ENCODE measurements at regions of chr4 and their contacts with region 1.

Region 1: DNA sequence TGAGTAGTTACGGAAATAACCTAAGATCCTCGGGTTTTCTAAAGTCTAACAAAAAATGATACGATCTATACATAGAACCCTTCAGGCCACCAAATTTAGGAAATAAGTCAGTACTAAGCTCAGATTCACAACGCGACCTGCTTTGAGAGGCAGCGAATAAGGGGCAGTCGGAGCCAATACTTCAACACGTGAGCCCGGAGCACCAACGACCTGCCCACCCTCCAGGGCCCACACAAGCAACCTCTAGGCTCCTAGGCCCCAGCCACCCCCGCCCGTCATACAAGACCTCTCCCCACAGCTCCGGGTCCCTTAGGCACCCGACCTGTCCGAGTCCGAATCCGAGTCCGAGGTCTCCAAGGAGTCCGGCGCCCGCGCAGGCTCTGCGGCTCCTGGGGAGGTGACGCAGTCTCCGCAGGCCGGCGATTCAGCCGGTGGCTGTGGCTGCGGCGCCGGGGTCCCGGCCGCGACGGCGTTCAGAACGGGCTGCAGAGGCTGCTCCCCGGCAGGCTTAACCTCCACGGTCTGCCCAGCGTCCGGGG is 580 bp downstream of the NAF1 start:
- H3K4me3 Mint-ChIP-seq: peak overlapping the region; percentile 90
- H3K27ac Mint-ChIP-seq: peak overlapping the region; percentile 91
- H3K4me1 Mint-ChIP-seq: peaks cover 29% of the 10 kb centered on the region
- H3K27me3 Mint-ChIP-seq: peaks cover 6% of the 10 kb centered on the region

Region 2: DNA sequence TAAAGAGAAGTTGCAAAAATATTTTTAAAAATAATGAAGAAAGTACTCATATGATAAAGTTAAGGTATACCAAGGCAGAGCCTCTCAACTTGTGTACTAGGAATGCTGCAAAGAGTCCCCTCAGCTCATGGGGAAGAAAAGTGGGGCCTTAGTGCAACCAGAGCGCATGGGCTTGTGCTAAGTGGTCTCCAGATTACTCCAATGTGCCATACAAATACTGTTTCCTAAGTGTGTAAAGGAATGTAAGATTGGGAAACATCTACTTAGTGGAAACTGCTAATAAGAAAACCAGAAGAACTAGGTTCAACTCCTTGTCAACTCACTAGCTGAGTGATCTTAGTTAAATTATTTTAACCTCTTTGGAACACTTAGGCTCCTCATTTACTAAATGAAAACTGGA is 38.5 kb before region 1 on chr4:
- intact Hi-C with region 1: no loop called
- H3K4me3 Mint-ChIP-seq: no peak overlapping the region
- H3K27ac Mint-ChIP-seq: no peak overlapping the region
- H3K4me1 Mint-ChIP-seq: no peaks in the 10 kb centered on the region
- H3K27me3 Mint-ChIP-seq: no peaks in the 10 kb centered on the region

Region 3: GRCh38 chr4:163494360-163495162 is 328.5 kb after region 1 on chr4 and contains the start of gene TMA16:
- intact Hi-C with region 1: loop called (anchors 2 kb)
- H3K4me3 Mint-ChIP-seq: peak within 1 kb of the TSS; percentile 95
- H3K27ac Mint-ChIP-seq: peak within 1 kb of the TSS; percentile 98
- H3K4me1 Mint-ChIP-seq: peaks cover 14% of the 10 kb centered on the region
- H3K27me3 Mint-ChIP-seq: no peaks in the 10 kb centered on the region